ENCODE measurements at regions of chr10 and their contacts with region 1.

Region 1: GRCh38 chr10:103983367-103983911 is 16.5 kb downstream of the SLK start:
- DNase-seq: peak; percentile 13
- H3K4me3 Mint-ChIP-seq: peak overlapping the region; percentile 56
- H3K27ac Mint-ChIP-seq: peak overlapping the region; percentile 80
- H3K4me1 Mint-ChIP-seq: peaks cover 74% of the 10 kb centered on the region
- H3K27me3 Mint-ChIP-seq: no peaks in the 10 kb centered on the region

Region 2: DNA sequence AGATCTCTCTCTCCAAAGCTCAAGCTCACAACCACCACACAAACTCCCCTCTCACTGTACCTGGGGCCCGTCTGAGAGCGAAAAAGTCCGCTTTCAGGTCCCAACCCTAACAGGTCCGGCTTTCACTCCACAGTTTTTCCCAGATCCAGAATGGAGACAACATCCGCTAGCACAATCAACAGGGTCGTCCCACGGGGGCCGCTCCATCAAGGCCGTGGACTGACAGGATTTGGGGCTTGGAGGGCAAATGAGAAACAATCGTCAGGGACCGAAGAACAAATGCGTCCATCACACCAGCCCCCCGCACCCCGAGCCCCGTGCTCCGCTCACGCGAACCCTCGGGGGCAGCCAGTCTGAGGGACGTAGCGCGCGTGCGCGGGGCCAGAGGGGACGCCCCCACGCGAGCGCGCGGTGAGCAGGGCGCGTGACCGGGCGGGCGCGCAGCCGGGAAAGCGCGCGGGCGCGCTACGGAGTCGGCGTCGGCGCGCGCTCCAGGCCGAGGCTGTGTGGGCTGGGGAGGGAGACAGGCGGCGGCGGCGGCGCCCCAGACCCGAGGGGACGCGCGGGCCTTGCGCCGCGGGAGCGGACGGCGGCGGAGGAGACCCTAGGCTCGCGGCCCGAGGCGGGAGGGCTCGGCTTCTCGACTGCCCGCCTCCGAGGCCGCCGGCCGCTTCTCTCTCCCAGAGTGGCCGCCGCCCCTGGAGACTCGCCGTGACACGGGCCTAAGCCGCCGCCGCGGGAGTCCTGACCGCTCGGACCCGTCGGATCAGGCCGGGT is 16.6 kb before region 1 on chr10 and contains the start of gene SLK:
- CTCF ChIA-PET with region 1: no interaction called
- POLR2A ChIA-PET with region 1: interaction called, 5 read pairs
- intact Hi-C with region 1: loop called (anchors 1 kb)
- DNase-seq: peak; percentile 86
- H3K4me3 Mint-ChIP-seq: peak within 1 kb of the TSS; percentile 94
- H3K27ac Mint-ChIP-seq: peak within 1 kb of the TSS; percentile 92
- H3K4me1 Mint-ChIP-seq: peaks cover 33% of the 10 kb centered on the region
- H3K27me3 Mint-ChIP-seq: no peaks in the 10 kb centered on the region
- total RNA-seq, gene SLK: 26.1 to 27.7 TPM

Region 3: DNA sequence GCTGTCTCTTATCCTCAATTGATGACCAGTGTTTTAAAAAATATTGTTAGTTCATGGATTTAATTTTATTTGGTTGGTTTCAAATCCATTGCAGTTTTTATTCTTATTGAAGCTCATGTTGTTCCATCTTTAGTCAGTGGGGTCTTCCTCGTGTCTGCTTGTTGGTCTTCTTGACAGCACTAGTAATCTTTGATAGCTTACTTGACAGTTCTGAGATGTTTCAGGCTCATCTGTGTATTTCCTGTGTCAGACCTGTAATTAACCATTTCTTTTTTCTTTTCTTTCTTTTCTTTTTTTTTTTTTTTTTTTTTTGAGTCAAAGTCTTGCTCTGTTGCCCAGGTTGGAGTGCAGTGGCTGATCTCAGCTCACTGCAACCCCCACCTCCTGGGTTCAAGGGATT is 11.7 kb after region 1 on chr10:
- CTCF ChIA-PET with region 1: no interaction called
- POLR2A ChIA-PET with region 1: no interaction called
- intact Hi-C with region 1: no loop called
- DNase-seq: no peak
- H3K4me3 Mint-ChIP-seq: no peak overlapping the region
- H3K27ac Mint-ChIP-seq: peak overlapping the region; percentile 65
- H3K4me1 Mint-ChIP-seq: peaks cover 8% of the 10 kb centered on the region
- H3K27me3 Mint-ChIP-seq: no peaks in the 10 kb centered on the region

Region 4: DNA sequence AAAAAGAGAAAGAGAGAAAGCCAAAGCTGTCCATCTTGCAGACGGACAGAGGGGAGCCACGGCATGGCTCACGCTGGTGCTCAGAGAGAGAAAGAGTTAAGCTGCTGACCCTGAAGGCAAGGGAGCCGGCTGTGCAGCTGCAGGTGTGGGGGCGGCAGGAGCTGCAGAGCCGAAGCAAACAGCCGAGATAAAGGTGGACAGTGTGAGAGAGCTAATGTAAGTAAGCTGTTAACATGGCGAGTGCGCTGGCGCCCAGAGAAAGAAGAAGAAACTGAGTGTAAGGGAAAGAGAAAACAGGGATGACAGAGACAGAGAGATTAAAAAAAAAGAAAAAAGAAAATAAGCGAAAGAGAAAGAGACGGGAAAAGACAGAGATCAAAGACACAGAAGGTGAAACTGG is 84.1 kb after region 1 on chr10:
- CTCF ChIA-PET with region 1: no interaction called
- POLR2A ChIA-PET with region 1: no interaction called
- intact Hi-C with region 1: loop called (anchors 5 kb)
- DNase-seq: no peak
- H3K4me3 Mint-ChIP-seq: no peak overlapping the region
- H3K27ac Mint-ChIP-seq: no peak overlapping the region
- H3K4me1 Mint-ChIP-seq: no peaks in the 10 kb centered on the region
- H3K27me3 Mint-ChIP-seq: no peaks in the 10 kb centered on the region